GM10248 (cell line): ENCODE measurements at regions of chr5 and their contacts with region 1.

Region 1: GRCh38 chr5:151819830-151820229 is 48.1 kb downstream of the G3BP1 start:
- DNase-seq: no peak
- CTCF ChIP-seq: no peak

Region 2: GRCh38 chr5:152142840-152143469 is 323.1 kb after region 1 on chr5:
- CTCF ChIA-PET with region 1: interaction called, 354 read pairs
- POLR2A ChIA-PET with region 1: no interaction called
- DNase-seq: peak; percentile 67
- CTCF ChIP-seq: peak; percentile 86